ENCODE measurements at regions of chr1 and their contacts with region 1.

Region 1: GRCh38 chr1:225777583-225778336 is at the start of gene SRP9:
- DNase-seq: peak; percentile 97 to 100 (median 99)
- ATAC-seq: peak; percentile 98
- H3K4me3 ChIP-seq: peak within 1 kb of the TSS; percentile 94
- H3K4me3 Mint-ChIP-seq: no peak within 1 kb of the TSS
- H3K27ac ChIP-seq: peak within 1 kb of the TSS; percentile 97
- H3K27ac Mint-ChIP-seq: no peak within 1 kb of the TSS
- H3K4me1 ChIP-seq: peaks cover 22 to 51% of the 10 kb centered on the region in 2 donors
- H3K4me1 Mint-ChIP-seq: peaks cover 17 to 54% (median 36%) of the 10 kb centered on the region in 7 donors
- H3K27me3 ChIP-seq: no peaks in the 10 kb centered on the region
- H3K27me3 Mint-ChIP-seq: no peaks in the 10 kb centered on the region
- total RNA-seq, gene SRP9: 76.1 to 193 (median 145) TPM

Region 2: DNA sequence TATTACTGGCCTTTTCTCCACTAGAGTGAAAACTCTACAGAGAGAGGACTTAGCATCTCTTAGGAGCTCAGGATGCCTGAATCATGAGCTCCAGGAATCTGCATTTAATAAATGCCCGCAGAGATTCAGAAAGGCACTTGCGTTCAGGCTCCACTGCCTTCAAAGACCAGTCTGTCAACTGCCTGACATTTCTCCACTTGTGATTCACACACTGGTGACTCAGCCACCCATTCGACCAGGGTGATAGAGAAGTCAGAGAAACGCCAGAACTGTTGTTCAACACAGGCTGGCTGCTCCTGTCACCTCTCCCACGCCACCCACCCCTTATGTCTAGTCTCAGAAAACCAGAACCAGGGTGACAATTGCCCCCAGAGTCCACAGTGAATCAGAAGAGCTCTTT is 323.0 kb before region 1 on chr1:
- CTCF ChIA-PET with region 1: no interaction called
- POLR2A ChIA-PET with region 1: no interaction called
- intact Hi-C with region 1: no loop called
- DNase-seq: peak in 1 of 9 donors; percentile 69
- ATAC-seq: peak; percentile 91
- H3K4me3 ChIP-seq: no peak overlapping the region
- H3K4me3 Mint-ChIP-seq: peak overlapping the region in 2 of 10 donors; percentile 49 to 71
- H3K27ac ChIP-seq: no peak overlapping the region
- H3K27ac Mint-ChIP-seq: peak overlapping the region in 3 of 9 donors; percentile 6 to 88 (median 78)
- H3K4me1 ChIP-seq: peaks cover 0 to 9% of the 10 kb centered on the region in 2 donors
- H3K4me1 Mint-ChIP-seq: peaks cover 24 to 45% (median 30%) of the 10 kb centered on the region in 7 donors
- H3K27me3 ChIP-seq: no peaks in the 10 kb centered on the region
- H3K27me3 Mint-ChIP-seq: peaks cover 0 to 3% (median 0%) of the 10 kb centered on the region in 5 donors

Region 3: GRCh38 chr1:225474986-225475820 is 302.6 kb before region 1 on chr1:
- CTCF ChIA-PET with region 1: interaction called, 5 read pairs
- POLR2A ChIA-PET with region 1: interaction called, 7 read pairs
- intact Hi-C with region 1: loop called (anchors 2 kb)
- DNase-seq: peak; percentile 36 to 88 (median 68)
- ATAC-seq: peak; percentile 96
- H3K4me3 ChIP-seq: no peak overlapping the region
- H3K4me3 Mint-ChIP-seq: peak overlapping the region in 5 of 10 donors; percentile 38 to 59 (median 56)
- H3K27ac ChIP-seq: no peak overlapping the region
- H3K27ac Mint-ChIP-seq: peak overlapping the region in 2 of 9 donors; percentile 38 to 87
- H3K4me1 ChIP-seq: peaks cover 11 to 37% of the 10 kb centered on the region in 2 donors
- H3K4me1 Mint-ChIP-seq: peaks cover 36 to 61% (median 52%) of the 10 kb centered on the region in 7 donors
- H3K27me3 ChIP-seq: no peaks in the 10 kb centered on the region
- H3K27me3 Mint-ChIP-seq: peaks cover 0 to 5% (median 0%) of the 10 kb centered on the region in 5 donors

Region 4: GRCh38 chr1:225809842-225810578 is 32.2 kb after region 1 on chr1 and contains the start of gene EPHX1:
- CTCF ChIA-PET with region 1: interaction called, 5 read pairs
- POLR2A ChIA-PET with region 1: interaction called, 30 read pairs
- intact Hi-C with region 1: loop called (anchors 1 kb)
- DNase-seq: peak; percentile 35 to 78 (median 54)
- ATAC-seq: peak; percentile 89
- H3K4me3 ChIP-seq: peak within 1 kb of the TSS; percentile 41
- H3K4me3 Mint-ChIP-seq: peak within 1 kb of the TSS; percentile 77 to 89 (median 85)
- H3K27ac ChIP-seq: peak within 1 kb of the TSS; percentile 29
- H3K27ac Mint-ChIP-seq: peak within 1 kb of the TSS in 7 of 9 donors; percentile 8 to 61 (median 34)
- H3K4me1 ChIP-seq: no peaks in the 10 kb centered on the region
- H3K4me1 Mint-ChIP-seq: peaks cover 0 to 19% (median 8%) of the 10 kb centered on the region in 7 donors
- H3K27me3 ChIP-seq: no peaks in the 10 kb centered on the region
- H3K27me3 Mint-ChIP-seq: peaks cover 0 to 23% (median 0%) of the 10 kb centered on the region in 5 donors
- total RNA-seq, gene EPHX1: 1.5 to 3.2 (median 2.0) TPM

Region 5: DNA sequence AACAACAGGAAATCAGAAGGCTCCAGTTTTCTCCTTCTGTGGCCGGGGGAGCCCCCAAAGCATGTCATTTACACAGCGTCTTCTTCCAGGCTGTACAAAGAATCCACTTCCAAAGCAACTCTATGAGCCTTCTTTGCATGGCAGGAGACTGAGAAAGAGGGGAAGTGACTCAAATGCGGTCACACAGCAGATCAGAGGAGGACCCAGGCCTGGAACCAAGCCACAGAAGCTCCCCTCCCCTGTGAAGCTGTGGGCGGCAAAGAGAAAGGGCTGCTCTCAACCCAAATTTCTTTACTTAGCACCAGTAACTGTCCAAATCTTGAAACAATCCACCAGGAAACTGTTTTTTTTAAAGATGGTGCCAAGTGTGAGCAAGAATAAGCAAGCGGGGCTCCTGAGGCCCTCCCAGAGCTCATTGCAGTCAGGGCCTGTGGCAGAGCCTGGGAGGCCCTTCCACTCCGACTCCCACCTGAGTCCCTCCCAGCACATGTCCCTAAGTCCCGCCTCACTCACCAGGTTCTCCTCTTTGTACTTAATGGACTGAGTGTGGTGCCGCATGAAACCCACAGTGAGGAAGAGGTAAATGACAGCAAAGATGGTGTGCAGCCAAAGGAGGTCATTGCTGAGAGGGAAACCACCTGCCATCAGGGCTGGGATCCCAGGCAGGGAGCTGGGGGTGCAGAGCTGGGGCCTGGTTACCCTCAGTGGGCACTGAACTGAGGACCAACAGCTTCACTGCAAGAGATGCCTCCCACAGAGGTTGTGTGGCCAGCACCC is 88.5 kb after region 1 on chr1:
- CTCF ChIA-PET with region 1: no interaction called
- POLR2A ChIA-PET with region 1: interaction called, 5 read pairs
- intact Hi-C with region 1: loop called (anchors 5 kb)
- DNase-seq: peak in 8 of 9 donors; percentile 58 to 78 (median 68)
- ATAC-seq: peak; percentile 91
- H3K4me3 ChIP-seq: no peak overlapping the region
- H3K4me3 Mint-ChIP-seq: peak overlapping the region; percentile 44 to 80 (median 66)
- H3K27ac ChIP-seq: peak overlapping the region; percentile 68
- H3K27ac Mint-ChIP-seq: peak overlapping the region; percentile 68 to 94 (median 85)
- H3K4me1 ChIP-seq: peaks cover 25 to 32% of the 10 kb centered on the region in 2 donors
- H3K4me1 Mint-ChIP-seq: peaks cover 36 to 58% (median 51%) of the 10 kb centered on the region in 7 donors
- H3K27me3 ChIP-seq: no peaks in the 10 kb centered on the region
- H3K27me3 Mint-ChIP-seq: no peaks in the 10 kb centered on the region

Region 6: GRCh38 chr1:225911191-225912130 is 133.7 kb after region 1 on chr1:
- CTCF ChIA-PET with region 1: interaction called, 12 read pairs
- POLR2A ChIA-PET with region 1: interaction called, 8 read pairs
- intact Hi-C with region 1: loop called (anchors 1 kb)
- DNase-seq: peak; percentile 59 to 87 (median 75)
- ATAC-seq: peak; percentile 88
- H3K4me3 ChIP-seq: no peak overlapping the region
- H3K4me3 Mint-ChIP-seq: peak overlapping the region in 4 of 10 donors; percentile 5 to 51 (median 24)
- H3K27ac ChIP-seq: peak overlapping the region; percentile 34
- H3K27ac Mint-ChIP-seq: peak overlapping the region in 7 of 9 donors; percentile 45 to 80 (median 68)
- H3K4me1 ChIP-seq: peaks cover 11 to 28% of the 10 kb centered on the region in 2 donors
- H3K4me1 Mint-ChIP-seq: peaks cover 18 to 53% (median 35%) of the 10 kb centered on the region in 7 donors
- H3K27me3 ChIP-seq: no peaks in the 10 kb centered on the region
- H3K27me3 Mint-ChIP-seq: peaks cover 0 to 5% (median 0%) of the 10 kb centered on the region in 5 donors

Region 7: DNA sequence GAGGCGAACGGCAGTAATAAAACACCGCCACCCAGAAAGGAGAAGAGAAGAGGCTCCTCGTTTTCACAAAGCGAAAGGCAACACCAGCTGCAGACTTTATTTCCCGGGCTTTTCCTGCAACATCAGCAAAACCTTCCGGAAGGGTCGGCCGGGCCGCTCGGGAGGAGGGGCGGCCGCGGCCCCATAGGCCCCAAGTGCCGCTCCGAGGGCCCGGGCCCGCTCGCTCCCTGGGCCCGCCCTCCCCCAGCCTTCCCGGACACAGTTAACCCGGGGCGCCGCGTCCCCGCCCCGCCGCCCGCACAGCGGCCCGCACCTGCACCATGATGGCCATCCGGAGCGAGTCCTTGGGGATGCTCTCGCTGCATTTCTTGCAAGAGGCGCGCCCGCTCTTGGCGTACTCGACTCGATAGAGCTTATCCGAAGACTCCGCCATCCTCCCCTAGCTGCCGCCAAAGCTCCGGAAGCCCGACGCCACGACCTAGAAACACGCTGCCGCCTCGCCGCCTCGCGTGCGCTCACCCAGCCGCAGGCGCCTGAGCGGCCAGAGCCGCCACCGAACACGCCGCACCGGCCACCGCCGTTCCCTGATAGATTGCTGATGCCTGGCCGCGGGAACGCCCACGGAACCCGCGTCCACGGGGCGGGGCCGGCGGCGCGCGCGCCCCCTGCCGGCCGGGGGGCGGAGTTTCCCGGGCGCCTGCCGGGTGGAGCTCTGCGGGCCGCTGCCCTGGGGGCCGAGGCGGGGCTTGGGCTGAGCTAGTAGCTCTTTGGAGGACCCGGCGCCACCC is 629.9 kb after region 1 on chr1 and contains the start of gene PARP1:
- CTCF ChIA-PET with region 1: no interaction called
- POLR2A ChIA-PET with region 1: no interaction called
- intact Hi-C with region 1: loop called (anchors 5 to 10 kb)
- DNase-seq: peak; percentile 83 to 93 (median 89)
- ATAC-seq: peak; percentile 94
- H3K4me3 ChIP-seq: peak within 1 kb of the TSS; percentile 82
- H3K4me3 Mint-ChIP-seq: peak within 1 kb of the TSS; percentile 89 to 99 (median 94)
- H3K27ac ChIP-seq: peak within 1 kb of the TSS; percentile 74
- H3K27ac Mint-ChIP-seq: peak within 1 kb of the TSS; percentile 68 to 96 (median 93)
- H3K4me1 ChIP-seq: peaks cover 23 to 30% of the 10 kb centered on the region in 2 donors
- H3K4me1 Mint-ChIP-seq: peaks cover 37 to 46% (median 40%) of the 10 kb centered on the region in 7 donors
- H3K27me3 ChIP-seq: no peaks in the 10 kb centered on the region
- H3K27me3 Mint-ChIP-seq: peaks cover 0 to 3% (median 0%) of the 10 kb centered on the region in 5 donors
- total RNA-seq, gene PARP1: 63.6 to 165 (median 89.3) TPM